Ascending aorta (tissue), 2 donors: ENCODE measurements at regions of chr6 and their contacts with region 1.

Region 1: GRCh38 chr6:2999618-3000557 is at the start of gene NQO2:
- DNase-seq: peak; percentile 66 to 95
- H3K4me3 ChIP-seq: peak within 1 kb of the TSS; percentile 69 to 74
- H3K27ac ChIP-seq: peak within 1 kb of the TSS; percentile 85 to 91
- H3K4me1 ChIP-seq: peaks cover 0 to 16% of the 10 kb centered on the region in 2 donors
- H3K27me3 ChIP-seq: no peaks in the 10 kb centered on the region
- CTCF ChIP-seq: no peak
- total RNA-seq, gene NQO2: 7.7 TPM

Region 2: DNA sequence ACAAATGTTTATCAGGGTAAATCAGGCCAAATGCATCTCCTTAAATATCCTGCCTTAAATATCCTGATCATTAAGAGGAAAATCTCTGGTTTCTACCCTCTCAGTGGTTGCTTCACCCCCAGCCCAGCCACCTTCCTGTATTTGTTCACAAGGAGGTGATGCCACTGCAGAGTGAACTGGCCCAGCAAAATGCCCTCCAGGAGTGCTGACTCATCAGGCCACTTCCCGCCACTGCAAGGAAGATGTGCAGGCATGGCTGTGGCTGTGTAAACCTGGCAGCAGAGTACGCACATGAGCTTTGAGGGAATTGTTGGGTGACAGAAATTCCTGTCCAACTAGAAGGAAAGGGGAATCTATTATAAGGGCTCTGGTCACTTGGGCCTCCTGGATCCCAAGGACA is 13.6 kb after region 1 on chr6:
- intact Hi-C with region 1: no loop called
- DNase-seq: no peak
- H3K4me3 ChIP-seq: no peak overlapping the region
- H3K27ac ChIP-seq: no peak overlapping the region
- H3K4me1 ChIP-seq: no peaks in the 10 kb centered on the region
- H3K27me3 ChIP-seq: no peaks in the 10 kb centered on the region
- CTCF ChIP-seq: no peak

Region 3: DNA sequence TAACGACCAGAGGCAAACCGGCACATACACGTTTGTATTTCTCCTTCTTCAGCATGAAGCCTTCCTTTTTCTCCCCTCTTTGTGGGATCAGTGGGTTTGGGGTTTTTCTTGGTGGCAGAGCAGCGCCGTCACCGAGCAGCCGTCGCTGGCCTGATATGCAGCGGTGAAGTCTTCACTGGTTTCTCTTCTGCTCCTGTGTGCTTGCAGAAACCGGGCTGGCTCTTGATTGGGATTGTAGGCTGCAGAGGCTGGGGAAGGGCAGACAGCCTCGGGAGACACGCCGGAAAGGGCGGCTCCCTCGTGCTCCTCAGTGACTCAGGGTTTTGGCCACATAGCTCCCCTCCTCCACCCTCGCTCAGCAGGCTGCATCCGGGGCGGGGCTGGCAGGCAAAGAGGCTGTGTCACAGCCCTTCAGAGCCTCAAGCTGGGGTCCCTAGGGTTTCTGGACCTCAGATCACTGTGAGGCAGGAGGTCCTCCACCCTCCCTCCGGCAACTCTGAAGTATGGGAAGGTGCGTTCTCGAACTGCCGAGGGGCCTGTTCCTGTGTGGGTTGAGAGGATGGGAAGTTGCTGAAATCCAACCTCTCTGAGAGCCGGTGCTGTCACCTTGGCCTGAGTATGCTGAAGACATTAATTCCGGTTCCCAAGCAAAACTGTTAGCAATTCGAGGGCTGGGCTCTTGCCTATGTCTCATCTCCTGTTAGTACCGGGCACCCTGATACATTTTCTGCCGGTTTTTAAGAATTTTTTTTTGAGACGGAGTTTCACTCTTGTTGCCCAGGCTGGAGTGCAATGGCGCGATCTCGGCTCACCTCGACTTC is 24.0 kb after region 1 on chr6:
- intact Hi-C with region 1: loop called (anchors 2 kb)
- DNase-seq: peak; percentile 80 to 95
- H3K4me3 ChIP-seq: peak overlapping the region; percentile 59 to 69
- H3K27ac ChIP-seq: peak overlapping the region; percentile 77 to 90
- H3K4me1 ChIP-seq: peaks cover 5 to 9% of the 10 kb centered on the region in 2 donors
- H3K27me3 ChIP-seq: no peaks in the 10 kb centered on the region
- CTCF ChIP-seq: no peak

Region 4: DNA sequence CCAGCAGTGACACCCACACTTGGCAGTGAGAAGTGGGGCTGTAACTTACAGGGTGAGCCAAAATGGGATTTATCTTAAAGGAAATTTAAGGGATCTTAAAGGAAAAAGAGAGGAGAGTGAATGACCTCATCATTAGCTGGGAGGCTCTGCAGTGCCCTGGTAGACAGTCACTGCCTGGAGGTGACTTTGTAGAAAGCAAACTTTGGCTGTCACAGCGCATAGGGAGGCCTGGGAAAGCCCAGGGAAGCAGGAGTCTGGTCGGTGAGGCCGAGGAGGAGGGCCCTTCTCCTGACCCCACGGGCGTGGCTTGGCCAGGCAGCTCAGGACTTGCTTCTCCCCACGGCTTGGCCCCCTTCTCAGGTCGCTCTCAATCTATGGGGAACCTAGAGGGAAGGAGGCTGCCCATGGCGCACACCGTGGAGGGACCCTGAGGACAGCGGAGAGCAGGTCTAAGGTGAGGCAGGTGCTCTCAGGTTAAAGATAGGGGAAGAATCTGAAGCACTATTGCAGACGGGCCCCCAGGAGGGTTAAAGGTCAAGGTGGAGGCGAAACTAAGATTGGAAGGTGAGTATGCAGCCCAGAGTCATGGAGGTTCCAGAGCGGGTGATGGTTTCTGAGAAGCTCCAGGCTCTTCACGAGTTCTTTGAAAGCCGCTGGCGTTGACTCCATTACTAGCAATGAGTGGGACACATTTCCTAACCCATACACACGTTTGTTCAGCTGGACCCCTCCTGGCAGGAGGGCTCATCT is 52.8 kb after region 1 on chr6:
- intact Hi-C with region 1: loop called (anchors 1 kb)
- DNase-seq: no peak
- H3K4me3 ChIP-seq: no peak overlapping the region
- H3K27ac ChIP-seq: no peak overlapping the region
- H3K4me1 ChIP-seq: peaks cover 0 to 10% of the 10 kb centered on the region in 2 donors
- H3K27me3 ChIP-seq: no peaks in the 10 kb centered on the region
- CTCF ChIP-seq: no peak

Region 5: DNA sequence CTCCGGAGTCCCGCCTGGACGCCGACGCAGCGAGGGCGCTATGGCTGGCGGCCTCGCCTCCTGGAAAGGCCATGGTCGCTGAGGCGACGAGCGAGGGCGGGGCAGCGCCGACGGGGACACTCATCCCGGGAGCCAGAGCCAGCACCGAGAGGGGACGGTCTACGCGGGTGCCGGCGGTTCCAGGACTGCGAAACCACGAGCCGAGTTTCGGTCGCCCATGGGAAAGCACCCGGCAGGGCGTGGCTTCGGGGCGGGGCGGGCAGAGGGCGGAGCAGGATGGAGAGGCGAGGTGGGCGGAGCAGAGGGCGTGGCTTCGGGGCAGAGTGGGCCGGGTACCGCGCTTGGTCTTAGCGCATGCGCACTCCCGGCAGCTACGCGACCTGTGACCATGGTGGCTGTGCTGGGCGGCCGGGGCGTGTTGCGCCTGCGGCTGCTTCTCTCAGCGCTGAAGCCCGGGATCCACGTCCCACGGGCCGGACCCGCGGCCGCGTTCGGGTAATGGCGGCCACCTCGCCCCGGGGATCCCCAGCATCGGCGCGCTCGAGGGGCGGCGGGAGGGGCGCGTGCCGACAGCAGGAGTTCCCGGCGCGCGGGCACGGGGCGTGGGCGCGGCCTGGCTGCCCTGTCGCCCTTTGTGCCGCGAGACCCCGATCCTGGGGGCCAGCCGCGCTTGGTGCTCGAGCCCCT is 118.6 kb after region 1 on chr6 and contains the start of gene BPHL:
- intact Hi-C with region 1: loop called (anchors 2 kb)
- DNase-seq: peak; percentile 75 to 97
- H3K4me3 ChIP-seq: peak within 1 kb of the TSS; percentile 75 to 84
- H3K27ac ChIP-seq: peak within 1 kb of the TSS; percentile 81 to 93
- H3K4me1 ChIP-seq: peaks cover 0 to 5% of the 10 kb centered on the region in 2 donors
- H3K27me3 ChIP-seq: no peaks in the 10 kb centered on the region
- CTCF ChIP-seq: no peak
- total RNA-seq, gene BPHL: 7.7 TPM

Region 6: DNA sequence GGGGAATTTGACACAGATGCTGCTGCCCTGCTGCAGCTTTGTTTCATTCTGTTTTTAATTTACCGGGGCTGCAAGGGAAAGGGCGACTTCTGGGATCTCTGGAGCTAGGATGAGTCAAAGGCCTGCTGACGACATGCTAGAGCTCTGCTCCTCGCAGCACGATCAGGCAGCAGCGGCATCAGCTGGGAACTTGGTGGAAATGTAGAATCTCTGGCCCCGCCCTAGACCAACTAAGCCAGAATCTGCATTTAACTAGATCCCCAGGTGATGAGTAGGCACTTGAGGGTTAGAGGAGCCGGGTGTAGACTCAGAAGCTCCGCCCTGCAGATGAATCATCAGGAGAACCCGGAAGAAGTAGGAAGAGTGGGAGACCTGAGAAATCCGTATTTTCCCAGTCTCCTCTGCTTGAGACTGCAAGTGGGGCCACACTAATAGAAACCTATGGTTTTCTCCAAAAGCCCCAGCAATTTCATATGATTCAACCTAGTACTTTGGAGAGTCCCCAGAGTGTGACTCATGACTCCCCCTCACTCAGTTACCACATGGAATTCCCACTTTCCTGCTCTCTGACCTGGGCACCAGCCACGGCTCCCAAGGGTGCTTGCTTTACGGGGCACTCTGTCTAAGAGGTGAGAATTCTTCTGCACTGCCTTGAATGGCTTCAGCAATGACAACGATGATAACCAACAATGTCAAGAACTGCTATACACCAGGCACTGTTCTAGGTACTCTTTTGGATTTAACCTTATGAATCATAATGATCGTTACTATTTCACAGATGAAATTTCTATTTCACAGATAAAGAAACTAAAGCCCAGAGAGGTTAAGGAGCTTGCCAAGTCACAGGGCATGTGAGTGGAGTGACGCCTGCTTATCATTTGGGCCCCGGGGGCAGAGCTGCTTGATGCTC is 209.5 kb after region 1 on chr6:
- intact Hi-C with region 1: no loop called
- DNase-seq: peak in 1 of 2 donors; percentile 70
- H3K4me3 ChIP-seq: no peak overlapping the region
- H3K27ac ChIP-seq: peak overlapping the region; percentile 15 to 64
- H3K4me1 ChIP-seq: peaks cover 3 to 27% of the 10 kb centered on the region in 2 donors
- H3K27me3 ChIP-seq: no peaks in the 10 kb centered on the region
- CTCF ChIP-seq: no peak

Region 7: GRCh38 chr6:3724451-3725108 is 724.7 kb after region 1 on chr6:
- intact Hi-C with region 1: loop called (anchors 5 kb)
- DNase-seq: peak in 1 of 2 donors; percentile 82
- H3K4me3 ChIP-seq: peak overlapping the region in 1 of 2 donors; percentile 17
- H3K27ac ChIP-seq: peak overlapping the region; percentile 63 to 72
- H3K4me1 ChIP-seq: peaks cover 20 to 65% of the 10 kb centered on the region in 2 donors
- H3K27me3 ChIP-seq: no peaks in the 10 kb centered on the region
- CTCF ChIP-seq: no peak